ENCODE measurements at regions of chr18 and their contacts with region 1.

Region 1: GRCh38 chr18:3538456-3538855 is 88.5 kb downstream of the TGIF1 start:
- DNase-seq: peak; percentile 56
- H3K4me3 ChIP-seq: no peak overlapping the region
- H3K27ac ChIP-seq: no peak overlapping the region
- H3K4me1 ChIP-seq: peaks cover 13% of the 10 kb centered on the region
- H3K27me3 ChIP-seq: no peaks in the 10 kb centered on the region

Region 2: DNA sequence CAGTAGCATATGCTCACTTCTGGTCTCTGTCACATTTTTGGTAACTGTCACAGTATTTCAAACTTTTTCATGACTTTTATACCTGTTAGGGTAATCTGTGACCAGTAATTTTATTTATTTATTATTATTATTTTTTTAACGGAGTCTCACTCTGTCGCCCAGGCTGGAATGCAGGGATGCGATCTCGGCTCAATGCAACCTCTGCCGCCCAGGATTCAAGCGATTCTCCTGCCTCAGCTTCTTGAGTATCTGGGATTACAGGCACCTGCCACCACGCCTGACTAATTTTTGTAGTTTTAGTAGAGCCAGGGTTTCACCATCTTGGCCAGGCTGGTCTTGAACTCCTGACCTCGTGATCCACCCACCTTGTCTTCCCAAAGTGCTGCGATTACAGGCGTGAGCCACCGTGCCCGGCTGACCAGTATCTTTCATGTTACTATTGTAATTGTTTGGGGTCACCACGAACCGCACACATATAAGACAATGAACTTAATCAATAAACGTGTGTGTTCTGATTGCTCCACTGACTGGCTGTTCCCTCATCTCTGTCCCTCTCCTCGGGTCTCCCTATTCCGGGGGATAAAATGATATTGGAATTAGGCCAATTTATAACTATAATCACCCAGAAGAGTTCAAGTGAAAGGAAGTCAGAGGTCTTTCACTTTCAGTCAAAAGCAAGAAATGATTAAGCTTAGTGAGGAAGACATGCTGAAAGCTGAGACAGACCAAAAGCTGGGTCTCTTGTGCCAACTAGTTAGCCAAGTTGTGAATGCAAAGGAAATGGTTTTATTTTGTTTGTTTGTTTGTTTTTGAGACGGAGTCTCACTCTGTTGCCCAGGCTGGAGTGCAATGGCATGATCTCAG is 65.5 kb before region 1 on chr18:
- in situ Hi-C with region 1: loop called (anchors 10 kb)
- DNase-seq: no peak
- H3K4me3 ChIP-seq: no peak overlapping the region
- H3K27ac ChIP-seq: no peak overlapping the region
- H3K4me1 ChIP-seq: no peaks in the 10 kb centered on the region
- H3K27me3 ChIP-seq: no peaks in the 10 kb centered on the region

Region 3: GRCh38 chr18:3758531-3758930 is 220.1 kb after region 1 on chr18:
- in situ Hi-C with region 1: no loop called
- DNase-seq: peak; percentile 49
- H3K4me3 ChIP-seq: no peak overlapping the region
- H3K27ac ChIP-seq: no peak overlapping the region
- H3K4me1 ChIP-seq: no peaks in the 10 kb centered on the region
- H3K27me3 ChIP-seq: no peaks in the 10 kb centered on the region

Measured in GM23248 (cell line).